ENCODE measurements at regions of chr9 and their contacts with region 1.

Region 1: DNA sequence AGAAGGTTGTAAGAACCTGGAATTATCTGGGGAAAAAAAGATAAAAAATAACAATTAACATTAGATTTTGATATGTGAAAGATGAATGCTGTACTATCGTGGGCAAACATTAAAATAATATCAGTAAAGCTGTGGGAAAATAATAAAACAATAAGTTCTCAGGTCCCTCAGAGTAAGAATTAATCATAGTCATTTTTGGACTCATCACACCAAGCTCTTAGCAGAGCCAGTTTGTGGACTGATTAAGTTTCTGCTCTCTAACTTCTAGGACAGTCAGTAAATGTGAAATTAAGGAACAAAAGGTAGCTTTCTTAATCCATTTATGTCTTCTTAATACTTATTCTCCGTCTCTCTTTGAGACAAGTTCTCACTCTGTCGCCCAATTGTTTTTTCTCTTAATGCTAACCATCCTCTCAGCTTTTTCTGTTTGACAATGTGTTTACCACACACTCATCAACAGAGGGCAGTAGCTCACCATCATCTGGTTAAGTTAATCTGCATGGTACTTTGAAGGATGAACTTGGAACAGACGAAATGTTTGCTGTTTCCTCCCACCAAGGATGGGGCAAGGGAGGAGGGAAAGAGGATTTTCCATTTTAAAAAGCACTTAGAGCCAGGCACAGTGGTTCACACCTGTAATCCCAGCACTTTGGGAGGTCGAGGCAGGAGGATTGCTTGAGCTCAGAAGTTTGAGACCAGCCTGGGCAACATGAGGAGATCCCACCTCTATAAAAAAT is 5.3 kb upstream of the ACO1 start:
- DNase-seq: peak in 7 of 9 donors; percentile 49 to 78 (median 68)
- ATAC-seq: peak; percentile 90
- H3K4me3 ChIP-seq: no peak overlapping the region
- H3K4me3 Mint-ChIP-seq: peak overlapping the region in 4 of 10 donors; percentile 15 to 49 (median 36)
- H3K27ac ChIP-seq: no peak overlapping the region
- H3K27ac Mint-ChIP-seq: peak overlapping the region in 8 of 9 donors; percentile 1 to 83 (median 32)
- H3K4me1 ChIP-seq: peaks cover 5 to 13% of the 10 kb centered on the region in 2 donors
- H3K4me1 Mint-ChIP-seq: peaks cover 11 to 19% (median 16%) of the 10 kb centered on the region in 7 donors
- H3K27me3 ChIP-seq: no peaks in the 10 kb centered on the region
- H3K27me3 Mint-ChIP-seq: peaks cover 0 to 37% (median 9%) of the 10 kb centered on the region in 5 donors

Region 2: DNA sequence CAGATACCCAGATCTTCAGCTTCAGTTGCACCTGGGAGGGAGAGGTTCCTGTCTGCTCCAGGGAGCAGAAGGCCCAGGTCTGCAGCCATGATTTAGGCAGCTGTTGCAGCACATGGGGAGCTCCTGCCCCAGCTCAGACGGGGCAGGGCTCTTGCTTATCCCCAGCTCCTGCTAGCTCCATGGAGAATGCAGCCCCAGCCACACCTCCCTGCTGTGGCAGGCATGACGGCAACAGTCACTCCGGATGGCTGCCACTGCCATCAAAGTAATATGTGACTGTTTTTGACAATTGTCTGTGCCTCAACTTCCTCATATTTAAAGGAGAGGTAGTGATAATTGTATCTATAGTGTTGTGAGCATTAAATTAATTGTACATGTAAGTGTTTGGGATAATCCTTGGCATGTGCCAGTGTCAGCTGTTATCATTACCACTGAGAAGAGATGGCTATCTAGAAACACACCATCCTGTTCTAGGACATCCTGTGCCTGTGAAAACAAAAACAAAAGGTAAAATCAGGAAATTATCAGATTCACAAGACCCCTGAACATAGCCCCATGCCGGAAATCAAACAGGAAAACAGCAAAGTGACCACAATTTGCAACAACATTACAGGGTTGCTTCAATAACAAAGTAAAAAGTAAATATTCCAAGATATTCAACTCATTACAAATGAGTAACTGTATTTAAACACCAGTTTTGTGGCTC is 1043.5 kb before region 1 on chr9:
- CTCF ChIA-PET with region 1: no interaction called
- POLR2A ChIA-PET with region 1: no interaction called
- intact Hi-C with region 1: no loop called
- DNase-seq: peak in 1 of 9 donors; percentile 17
- ATAC-seq: no peak
- H3K4me3 ChIP-seq: peak overlapping the region; percentile 12
- H3K4me3 Mint-ChIP-seq: peak overlapping the region; percentile 3 to 71 (median 55)
- H3K27ac ChIP-seq: no peak overlapping the region
- H3K27ac Mint-ChIP-seq: peak overlapping the region in 6 of 9 donors; percentile 34 to 92 (median 59)
- H3K4me1 ChIP-seq: peaks cover 23 to 26% of the 10 kb centered on the region in 2 donors
- H3K4me1 Mint-ChIP-seq: peaks cover 6 to 28% (median 20%) of the 10 kb centered on the region in 7 donors
- H3K27me3 ChIP-seq: no peaks in the 10 kb centered on the region
- H3K27me3 Mint-ChIP-seq: peaks cover 0 to 3% (median 0%) of the 10 kb centered on the region in 5 donors

Region 3: GRCh38 chr9:32426278-32426939 is 47.2 kb after region 1 on chr9:
- CTCF ChIA-PET with region 1: interaction called, 45 read pairs
- POLR2A ChIA-PET with region 1: no interaction called
- intact Hi-C with region 1: no loop called
- DNase-seq: no peak
- ATAC-seq: no peak
- H3K4me3 ChIP-seq: no peak overlapping the region
- H3K4me3 Mint-ChIP-seq: no peak overlapping the region
- H3K27ac ChIP-seq: no peak overlapping the region
- H3K27ac Mint-ChIP-seq: peak overlapping the region in 5 of 9 donors; percentile 15 to 82 (median 47)
- H3K4me1 ChIP-seq: no peaks in the 10 kb centered on the region
- H3K4me1 Mint-ChIP-seq: peaks cover 0 to 6% (median 0%) of the 10 kb centered on the region in 7 donors
- H3K27me3 ChIP-seq: no peaks in the 10 kb centered on the region
- H3K27me3 Mint-ChIP-seq: no peaks in the 10 kb centered on the region

Region 4: GRCh38 chr9:32442433-32442832 is 63.3 kb after region 1 on chr9:
- CTCF ChIA-PET with region 1: interaction called, 10 read pairs
- POLR2A ChIA-PET with region 1: no interaction called
- intact Hi-C with region 1: no loop called
- DNase-seq: no peak
- ATAC-seq: no peak
- H3K4me3 ChIP-seq: no peak overlapping the region
- H3K4me3 Mint-ChIP-seq: no peak overlapping the region
- H3K27ac ChIP-seq: no peak overlapping the region
- H3K27ac Mint-ChIP-seq: no peak overlapping the region
- H3K4me1 ChIP-seq: no peaks in the 10 kb centered on the region
- H3K4me1 Mint-ChIP-seq: no peaks in the 10 kb centered on the region
- H3K27me3 ChIP-seq: no peaks in the 10 kb centered on the region
- H3K27me3 Mint-ChIP-seq: no peaks in the 10 kb centered on the region

Region 5: DNA sequence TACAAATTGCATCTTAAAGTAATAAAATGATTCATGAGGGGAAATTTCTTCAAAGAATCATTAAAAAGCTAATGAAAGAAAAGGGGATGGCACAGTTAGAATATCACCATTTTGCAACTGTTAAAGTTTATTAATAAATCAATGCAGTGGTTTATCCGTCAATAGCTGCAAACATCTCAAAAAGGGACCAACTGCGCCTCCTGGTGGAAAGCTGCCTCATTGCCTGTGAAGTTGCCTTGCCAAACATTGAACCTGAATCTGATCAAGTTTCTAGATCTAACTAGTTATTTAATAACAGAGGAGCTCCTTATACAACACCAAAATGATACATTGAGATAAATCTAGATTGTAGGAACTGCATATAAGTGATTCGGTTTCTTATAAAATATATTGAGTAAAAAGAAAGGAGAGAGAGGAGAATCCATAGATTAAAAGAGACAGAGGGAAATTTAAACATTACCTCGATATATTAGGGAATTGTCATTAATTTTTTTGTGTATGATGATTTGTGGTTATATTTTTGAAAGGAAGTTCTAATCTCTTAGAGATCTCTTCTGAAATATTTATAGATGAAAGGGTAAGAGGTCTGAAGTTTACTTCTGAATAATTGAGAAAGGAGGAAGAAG is 200.7 kb after region 1 on chr9:
- CTCF ChIA-PET with region 1: interaction called, 261 read pairs
- POLR2A ChIA-PET with region 1: interaction called, 16 read pairs
- intact Hi-C with region 1: loop called (anchors 1 kb)
- DNase-seq: peak; percentile 53 to 77 (median 66)
- ATAC-seq: peak; percentile 81
- H3K4me3 ChIP-seq: no peak overlapping the region
- H3K4me3 Mint-ChIP-seq: no peak overlapping the region
- H3K27ac ChIP-seq: no peak overlapping the region
- H3K27ac Mint-ChIP-seq: peak overlapping the region in 1 of 9 donors; percentile 48
- H3K4me1 ChIP-seq: no peaks in the 10 kb centered on the region
- H3K4me1 Mint-ChIP-seq: peaks cover 0 to 8% (median 0%) of the 10 kb centered on the region in 7 donors
- H3K27me3 ChIP-seq: no peaks in the 10 kb centered on the region
- H3K27me3 Mint-ChIP-seq: peaks cover 4 to 30% (median 7%) of the 10 kb centered on the region in 5 donors

Region 6: GRCh38 chr9:32968101-32969011 is 589.2 kb after region 1 on chr9:
- CTCF ChIA-PET with region 1: interaction called, 17 read pairs
- POLR2A ChIA-PET with region 1: no interaction called
- intact Hi-C with region 1: loop called (anchors 1 kb)
- DNase-seq: peak in 7 of 9 donors; percentile 7 to 51 (median 35)
- ATAC-seq: no peak
- H3K4me3 ChIP-seq: no peak overlapping the region
- H3K4me3 Mint-ChIP-seq: no peak overlapping the region
- H3K27ac ChIP-seq: no peak overlapping the region
- H3K27ac Mint-ChIP-seq: peak overlapping the region in 2 of 9 donors; percentile 75 to 80
- H3K4me1 ChIP-seq: no peaks in the 10 kb centered on the region
- H3K4me1 Mint-ChIP-seq: peaks cover 0 to 5% (median 0%) of the 10 kb centered on the region in 7 donors
- H3K27me3 ChIP-seq: no peaks in the 10 kb centered on the region
- H3K27me3 Mint-ChIP-seq: no peaks in the 10 kb centered on the region

Measured in naive thymus-derived CD4-positive, alpha-beta T cell (primary cell).